Esophagus muscularis mucosa (tissue), 4 donors: ENCODE measurements at regions of chr17 and their contacts with region 1.

Region 1: GRCh38 chr17:4948931-4949320 is 596 bp upstream of the PFN1 start:
- DNase-seq: peak; percentile 93
- H3K4me3 ChIP-seq: peak overlapping the region; percentile 87 to 100 (median 100)
- H3K27ac ChIP-seq: peak overlapping the region; percentile 94 to 100 (median 98)
- H3K4me1 ChIP-seq: peaks cover 45 to 67% (median 62%) of the 10 kb centered on the region in 4 donors
- H3K27me3 ChIP-seq: no peaks in the 10 kb centered on the region
- CTCF ChIP-seq: no peak
- EP300 ChIP-seq: no peak
- POLR2A ChIP-seq: peak; percentile 8

Region 2: DNA sequence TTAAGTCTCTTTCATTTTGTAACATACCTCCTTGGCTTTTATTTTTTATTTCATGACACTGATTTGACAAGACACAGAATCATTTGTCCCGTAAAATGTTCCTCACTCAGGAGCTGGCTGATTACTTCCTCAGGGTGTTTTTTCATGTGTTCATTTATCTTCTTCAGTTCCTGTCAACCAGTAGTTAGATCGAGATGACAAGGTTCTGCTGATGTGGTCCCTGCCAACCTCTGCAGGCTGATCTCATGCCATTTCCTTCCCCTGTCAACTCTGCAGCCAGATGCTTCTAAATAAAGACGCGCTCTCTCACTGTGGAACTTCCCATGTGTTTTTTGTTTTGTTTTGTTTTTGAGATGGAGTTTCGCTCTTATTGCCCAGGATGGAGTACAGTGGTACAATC is 201.1 kb before region 1 on chr17:
- intact Hi-C with region 1: no loop called
- DNase-seq: no peak
- H3K4me3 ChIP-seq: no peak overlapping the region
- H3K27ac ChIP-seq: no peak overlapping the region
- H3K4me1 ChIP-seq: peaks cover 0 to 13% (median 11%) of the 10 kb centered on the region in 4 donors
- H3K27me3 ChIP-seq: peaks cover 0 to 83% (median 16%) of the 10 kb centered on the region in 4 donors
- CTCF ChIP-seq: no peak
- EP300 ChIP-seq: no peak
- POLR2A ChIP-seq: no peak

Region 3: DNA sequence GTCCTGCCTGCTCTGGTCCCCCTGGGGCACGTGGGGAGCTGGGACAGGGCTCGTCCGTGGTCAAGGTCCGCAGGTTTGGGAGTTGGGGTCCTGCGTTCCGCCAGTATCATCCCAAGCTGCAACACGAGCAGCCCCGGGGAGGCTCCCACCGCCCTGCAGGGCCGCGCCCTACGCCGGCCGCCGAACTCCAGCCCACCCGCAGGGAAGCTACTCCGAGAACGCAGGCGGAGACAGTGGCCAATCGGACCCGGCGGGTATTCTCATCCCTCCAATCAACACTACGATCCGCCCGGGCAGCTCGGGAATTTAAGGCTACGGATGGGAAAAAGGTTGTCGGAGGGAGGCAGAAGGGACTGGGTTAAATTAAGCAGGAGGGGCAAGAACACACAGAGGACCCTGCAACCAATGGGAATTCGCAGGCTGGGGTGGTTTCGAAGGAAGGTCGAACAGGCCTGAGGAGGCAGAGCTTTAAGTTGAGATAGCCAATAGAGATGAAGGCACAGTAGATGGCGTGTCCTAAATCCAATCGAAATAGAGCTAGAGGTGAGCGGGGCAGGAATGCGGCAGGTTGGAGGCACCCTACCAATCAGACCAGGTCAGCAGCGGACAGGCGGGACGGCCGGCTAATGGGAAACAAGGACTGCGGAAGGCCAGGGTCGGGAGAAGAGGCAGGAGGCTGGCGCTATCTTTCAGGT is 18.1 kb after region 1 on chr17:
- intact Hi-C with region 1: loop called (anchors 2 kb)
- DNase-seq: peak; percentile 100
- H3K4me3 ChIP-seq: peak overlapping the region; percentile 76 to 86 (median 78)
- H3K27ac ChIP-seq: peak overlapping the region; percentile 91 to 97 (median 95)
- H3K4me1 ChIP-seq: peaks cover 32 to 49% (median 43%) of the 10 kb centered on the region in 4 donors
- H3K27me3 ChIP-seq: no peaks in the 10 kb centered on the region
- CTCF ChIP-seq: peak in 1 of 3 experiments; percentile 27
- EP300 ChIP-seq: no peak
- POLR2A ChIP-seq: peak; percentile 50